ENCODE measurements at regions of chr15 and their contacts with region 1.

Region 1: DNA sequence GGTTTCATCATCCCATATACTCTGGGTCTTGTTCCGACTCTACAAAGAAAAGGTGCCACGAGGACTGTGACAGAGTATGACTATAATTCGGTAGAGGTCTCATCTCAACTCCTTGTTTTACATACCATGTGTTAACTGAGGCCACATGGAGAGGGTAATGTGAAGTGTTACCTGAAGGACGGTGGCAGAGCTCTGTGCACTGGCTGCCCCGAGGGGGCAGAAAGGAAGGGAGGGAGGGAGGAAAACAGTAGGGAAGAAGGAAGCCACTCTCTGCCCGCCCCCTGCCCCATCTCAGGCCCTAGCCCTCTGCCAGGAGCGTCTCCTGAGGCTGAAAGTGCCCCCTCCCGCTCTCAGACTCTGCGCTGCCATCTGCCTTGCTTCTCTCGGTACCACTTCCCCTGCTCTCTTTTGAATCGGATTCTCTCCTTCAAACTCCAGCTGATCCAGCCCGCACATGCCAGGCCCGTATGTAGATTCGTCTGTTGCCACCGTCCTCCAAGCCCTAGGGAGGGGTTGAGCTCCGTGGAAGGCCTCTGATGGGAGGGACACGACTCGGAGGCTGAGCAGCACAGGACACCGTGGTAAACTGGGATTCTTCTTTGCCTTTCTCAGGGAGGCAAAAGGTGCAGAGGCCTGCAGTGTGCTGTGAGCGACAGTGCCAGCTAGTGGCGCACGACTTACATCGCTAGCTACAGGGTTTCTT is 70.5 kb upstream of the ATP10A start:
- ATAC-seq: peak; percentile 83 to 99 (median 94)
- H3K4me3 ChIP-seq: no peak overlapping the region
- H3K27ac ChIP-seq: no peak overlapping the region
- H3K4me1 ChIP-seq: peaks cover 13 to 19% of the 10 kb centered on the region in 2 donors

Region 2: GRCh38 chr15:25508369-25509002 is 425.1 kb before region 1 on chr15:
- in situ Hi-C with region 1: loop called in 3 of 9 experiments (anchors 25 kb)
- ATAC-seq: peak in 5 of 8 experiments; percentile 22 to 51 (median 45)
- H3K4me3 ChIP-seq: no peak overlapping the region
- H3K27ac ChIP-seq: no peak overlapping the region
- H3K4me1 ChIP-seq: peaks cover 12 to 17% of the 10 kb centered on the region in 2 donors

Region 3: DNA sequence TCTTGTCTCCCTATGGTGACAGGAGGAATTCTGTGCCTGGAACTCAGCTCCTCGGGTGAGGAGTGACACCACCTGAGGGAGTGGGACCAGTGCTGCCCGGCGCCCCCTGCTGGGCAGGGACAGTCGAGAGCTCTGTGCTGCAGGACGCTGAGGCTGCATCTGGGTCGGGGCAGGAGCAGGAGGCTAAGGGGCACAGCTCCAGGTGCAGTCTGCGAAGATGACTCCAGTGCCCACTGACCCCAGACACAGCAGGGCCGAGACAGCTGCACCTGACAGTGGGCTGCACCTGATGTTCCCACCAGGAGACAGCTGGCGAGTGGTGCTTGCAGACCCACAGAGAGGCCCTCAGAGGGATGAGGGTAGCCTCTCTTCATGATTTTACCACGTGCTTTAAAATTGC is 223.4 kb before region 1 on chr15:
- in situ Hi-C with region 1: loop called in 1 of 9 experiments (anchors 25 kb)
- ATAC-seq: peak; percentile 55 to 90 (median 74)
- H3K4me3 ChIP-seq: no peak overlapping the region
- H3K27ac ChIP-seq: no peak overlapping the region
- H3K4me1 ChIP-seq: no peaks in the 10 kb centered on the region

Region 4: GRCh38 chr15:26037369-26037768 is 103.8 kb after region 1 on chr15:
- in situ Hi-C with region 1: loop called in 1 of 9 experiments (anchors 25 kb)
- ATAC-seq: peak in 2 of 8 experiments; percentile 17 to 22
- H3K4me3 ChIP-seq: no peak overlapping the region
- H3K27ac ChIP-seq: no peak overlapping the region
- H3K4me1 ChIP-seq: peaks cover 26 to 28% of the 10 kb centered on the region in 2 donors

Region 5: GRCh38 chr15:26864664-26865191 is 931.1 kb after region 1 on chr15:
- in situ Hi-C with region 1: loop called in 2 of 9 experiments (anchors 25 kb)
- ATAC-seq: peak; percentile 39 to 87 (median 48)
- H3K4me3 ChIP-seq: no peak overlapping the region
- H3K27ac ChIP-seq: no peak overlapping the region
- H3K4me1 ChIP-seq: peaks cover 7 to 8% of the 10 kb centered on the region in 2 donors

Measured in motor neuron (in vitro differentiated cells).